ENCODE measurements at regions of chr13 and their contacts with region 1.

Region 1: DNA sequence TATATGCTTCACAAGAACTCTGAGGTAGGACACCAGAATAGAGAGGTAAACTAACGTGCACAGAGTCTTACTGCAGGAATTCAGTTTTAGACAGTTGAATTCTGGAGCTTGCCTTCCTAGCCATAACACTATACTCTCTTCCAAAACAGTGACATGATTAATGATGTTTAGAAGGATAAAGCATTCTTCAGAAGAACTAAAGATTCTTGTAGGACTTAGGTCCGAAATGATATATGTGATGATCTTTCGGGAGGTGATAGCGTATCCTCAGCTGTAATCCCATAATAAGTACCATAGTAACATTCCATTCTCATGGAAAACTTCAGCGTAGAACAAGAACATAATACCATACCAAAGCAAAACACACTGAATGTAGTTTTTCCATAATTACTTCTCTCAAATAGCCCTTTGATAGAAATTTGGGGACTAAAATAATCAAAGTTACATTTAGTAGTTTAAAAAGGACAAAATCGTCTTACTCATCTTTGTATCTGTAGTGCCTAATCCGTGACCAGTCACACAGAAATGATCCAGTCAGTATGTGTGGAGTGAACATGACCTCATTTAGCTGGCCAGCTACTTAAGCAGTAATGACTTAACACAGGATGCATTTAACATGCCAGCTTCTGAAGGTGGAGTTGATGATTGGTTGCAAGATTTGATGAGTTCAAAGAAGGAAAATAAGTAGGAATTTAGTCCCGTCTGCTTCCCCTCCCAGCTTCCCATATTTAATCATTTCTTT is 38.4 kb downstream of the PIBF1 start:
- DNase-seq: no peak
- ATAC-seq: no peak
- H3K4me3 ChIP-seq: no peak overlapping the region
- H3K4me3 Mint-ChIP-seq: no peak overlapping the region
- H3K27ac ChIP-seq: no peak overlapping the region
- H3K27ac Mint-ChIP-seq: no peak overlapping the region
- H3K4me1 ChIP-seq: no peaks in the 10 kb centered on the region
- H3K4me1 Mint-ChIP-seq: peaks cover 0 to 7% (median 3%) of the 10 kb centered on the region in 3 donors
- H3K27me3 ChIP-seq: no peaks in the 10 kb centered on the region
- H3K27me3 Mint-ChIP-seq: no peaks in the 10 kb centered on the region

Region 2: DNA sequence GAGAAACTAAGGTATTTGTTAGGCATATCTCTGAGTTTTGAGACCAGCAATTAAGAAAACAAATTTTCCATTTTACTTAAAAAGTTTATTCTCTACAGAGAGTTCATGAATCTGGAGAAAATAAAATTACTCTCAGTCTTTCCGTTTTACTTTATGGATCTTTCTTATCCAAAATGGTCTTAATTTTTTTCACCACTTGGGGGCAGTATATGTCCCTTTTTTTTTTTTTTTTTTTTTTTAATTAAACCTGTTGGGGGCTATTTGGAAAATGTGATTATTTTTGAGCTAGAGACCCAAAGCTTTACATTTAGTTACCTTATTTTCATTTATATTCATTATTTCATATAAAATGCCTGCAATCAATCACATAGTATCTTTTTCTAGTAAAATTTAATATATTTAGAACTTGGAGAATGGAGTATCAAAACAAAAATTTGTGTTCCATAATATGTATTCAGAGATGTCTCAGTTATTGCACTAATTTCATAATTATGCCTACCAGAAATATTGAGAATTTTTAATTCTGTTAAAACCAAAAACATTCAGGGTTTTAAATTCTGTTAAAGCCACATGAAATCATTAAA is 11.3 kb before region 1 on chr13:
- CTCF ChIA-PET with region 1: interaction called, 3 to 13 read pairs
- POLR2A ChIA-PET with region 1: no interaction called
- DNase-seq: peak in 1 of 35 experiments; percentile 57
- ATAC-seq: no peak
- H3K4me3 ChIP-seq: no peak overlapping the region
- H3K4me3 Mint-ChIP-seq: no peak overlapping the region
- H3K27ac ChIP-seq: no peak overlapping the region
- H3K27ac Mint-ChIP-seq: no peak overlapping the region
- H3K4me1 ChIP-seq: no peaks in the 10 kb centered on the region
- H3K4me1 Mint-ChIP-seq: peaks cover 0 to 2% (median 2%) of the 10 kb centered on the region in 3 donors
- H3K27me3 ChIP-seq: no peaks in the 10 kb centered on the region
- H3K27me3 Mint-ChIP-seq: no peaks in the 10 kb centered on the region

Region 3: GRCh38 chr13:72896869-72897268 is 76.5 kb after region 1 on chr13:
- CTCF ChIA-PET with region 1: no interaction called
- POLR2A ChIA-PET with region 1: no interaction called
- DNase-seq: no peak
- ATAC-seq: no peak
- H3K4me3 ChIP-seq: no peak overlapping the region
- H3K4me3 Mint-ChIP-seq: no peak overlapping the region
- H3K27ac ChIP-seq: no peak overlapping the region
- H3K27ac Mint-ChIP-seq: no peak overlapping the region
- H3K4me1 ChIP-seq: no peaks in the 10 kb centered on the region
- H3K4me1 Mint-ChIP-seq: peaks cover 0 to 2% (median 0%) of the 10 kb centered on the region in 3 donors
- H3K27me3 ChIP-seq: no peaks in the 10 kb centered on the region
- H3K27me3 Mint-ChIP-seq: no peaks in the 10 kb centered on the region

Region 4: GRCh38 chr13:73273741-73274140 is 453.4 kb after region 1 on chr13:
- CTCF ChIA-PET with region 1: no interaction called
- POLR2A ChIA-PET with region 1: no interaction called
- DNase-seq: no peak
- ATAC-seq: no peak
- H3K4me3 ChIP-seq: no peak overlapping the region
- H3K4me3 Mint-ChIP-seq: no peak overlapping the region
- H3K27ac ChIP-seq: no peak overlapping the region
- H3K27ac Mint-ChIP-seq: no peak overlapping the region
- H3K4me1 ChIP-seq: peaks cover 0 to 2% of the 10 kb centered on the region in 2 experiments
- H3K4me1 Mint-ChIP-seq: peaks cover 6 to 16% (median 15%) of the 10 kb centered on the region in 3 donors
- H3K27me3 ChIP-seq: no peaks in the 10 kb centered on the region
- H3K27me3 Mint-ChIP-seq: no peaks in the 10 kb centered on the region